ENCODE measurements at regions of chr19 and their contacts with region 1.

Region 1: DNA sequence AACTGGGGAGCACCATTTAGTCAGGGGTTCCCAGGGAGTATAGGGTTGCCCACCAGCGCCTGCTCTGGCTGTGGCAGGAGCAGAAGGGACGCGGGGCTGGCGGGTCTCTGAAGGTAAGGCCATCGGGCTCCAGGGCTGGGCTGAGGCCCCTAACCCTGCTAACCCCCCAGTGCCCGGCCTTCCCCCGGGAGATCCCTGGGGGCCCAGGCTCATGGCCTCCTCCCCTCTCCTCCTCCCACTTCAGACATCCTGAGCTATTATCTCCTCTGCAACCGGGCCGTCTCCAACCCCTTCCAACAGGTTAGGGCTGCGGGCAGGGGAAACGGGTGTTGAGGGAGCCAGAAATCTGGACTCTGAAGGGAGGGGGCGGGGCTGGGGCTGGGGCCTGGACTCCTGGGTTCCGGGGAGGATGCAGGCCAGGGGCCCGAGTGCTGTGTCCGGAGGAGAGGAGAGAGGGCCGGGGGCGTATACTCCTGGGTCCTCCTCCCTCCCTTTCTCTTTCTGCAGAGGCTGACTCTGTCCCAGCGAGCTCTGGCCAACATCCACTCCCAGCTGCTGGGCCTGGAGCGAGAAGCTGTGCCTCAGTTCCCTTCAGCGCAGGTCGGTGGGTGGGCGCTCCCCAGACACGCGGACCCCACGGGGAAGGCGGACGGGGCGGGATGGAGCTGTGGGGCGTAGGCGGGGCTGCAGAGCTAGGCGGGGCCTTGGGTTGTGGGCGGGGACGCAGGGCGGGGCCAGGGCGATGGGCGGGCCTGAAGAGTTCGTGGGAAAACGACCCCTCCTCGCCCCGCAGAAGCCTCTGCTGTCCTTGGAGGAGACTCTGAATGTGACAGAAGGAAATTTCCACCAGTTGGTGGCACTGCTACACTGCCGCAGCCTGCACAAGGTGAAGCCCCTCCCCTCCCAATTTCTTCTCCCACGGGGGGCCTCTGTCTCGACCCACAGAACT is 15.3 kb downstream of the TTYH1 start:
- DNase-seq: peak; percentile 81
- ATAC-seq: peak; percentile 85
- H3K4me3 Mint-ChIP-seq: peak overlapping the region; percentile 67
- H3K27ac Mint-ChIP-seq: no peak overlapping the region; the same call in 1 of the 2 replicates
- H3K4me1 Mint-ChIP-seq: peaks cover 29% of the 10 kb centered on the region
- H3K27me3 Mint-ChIP-seq: peaks cover 53% of the 10 kb centered on the region
- CTCF ChIP-seq: no peak

Region 2: DNA sequence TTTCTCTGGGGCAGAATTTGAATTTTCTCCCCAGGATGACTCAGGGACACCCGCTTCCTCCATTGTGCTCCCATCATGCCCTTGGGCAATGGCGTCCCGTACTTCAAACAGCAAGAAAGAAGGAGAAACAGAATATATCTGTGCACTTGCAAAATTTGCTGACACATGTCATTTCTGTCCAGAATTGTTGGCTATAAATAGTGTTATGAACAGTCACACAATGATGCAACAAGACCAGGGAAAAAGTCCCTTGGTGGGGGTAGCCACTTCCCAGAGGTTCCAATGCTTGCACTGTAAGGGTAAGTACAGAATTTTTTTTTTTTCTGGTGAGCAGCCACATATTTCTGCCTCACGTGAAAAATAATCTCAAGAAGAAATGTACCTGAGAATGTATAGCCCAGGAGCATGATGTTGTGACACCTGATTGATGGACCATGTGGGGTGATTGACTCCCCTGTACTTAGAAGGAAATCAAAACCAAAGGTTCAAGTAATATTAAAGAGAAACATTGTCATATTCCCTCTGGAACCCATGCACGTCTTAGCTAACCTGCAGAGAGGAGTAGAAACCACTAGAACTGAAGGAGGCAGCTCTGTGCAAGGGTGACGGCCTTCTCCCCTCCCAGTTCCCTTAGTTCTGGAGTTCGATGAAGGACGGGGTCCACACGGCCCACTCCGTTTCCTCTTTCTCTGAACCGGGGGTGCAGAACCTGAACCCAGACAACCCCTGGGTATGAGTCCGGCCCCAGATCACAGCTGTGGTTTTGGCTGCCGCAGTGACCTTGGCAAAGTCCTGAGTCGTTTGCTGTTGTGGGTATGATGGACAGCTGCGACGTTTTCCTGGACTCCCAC is 56.6 kb before region 1 on chr19:
- CTCF ChIA-PET with region 1: no interaction called
- POLR2A ChIA-PET with region 1: no interaction called
- DNase-seq: no peak
- ATAC-seq: no peak
- H3K4me3 Mint-ChIP-seq: no peak overlapping the region
- H3K27ac Mint-ChIP-seq: no peak overlapping the region
- H3K4me1 Mint-ChIP-seq: no peaks in the 10 kb centered on the region
- H3K27me3 Mint-ChIP-seq: peaks cover 25% of the 10 kb centered on the region
- CTCF ChIP-seq: no peak

Region 3: DNA sequence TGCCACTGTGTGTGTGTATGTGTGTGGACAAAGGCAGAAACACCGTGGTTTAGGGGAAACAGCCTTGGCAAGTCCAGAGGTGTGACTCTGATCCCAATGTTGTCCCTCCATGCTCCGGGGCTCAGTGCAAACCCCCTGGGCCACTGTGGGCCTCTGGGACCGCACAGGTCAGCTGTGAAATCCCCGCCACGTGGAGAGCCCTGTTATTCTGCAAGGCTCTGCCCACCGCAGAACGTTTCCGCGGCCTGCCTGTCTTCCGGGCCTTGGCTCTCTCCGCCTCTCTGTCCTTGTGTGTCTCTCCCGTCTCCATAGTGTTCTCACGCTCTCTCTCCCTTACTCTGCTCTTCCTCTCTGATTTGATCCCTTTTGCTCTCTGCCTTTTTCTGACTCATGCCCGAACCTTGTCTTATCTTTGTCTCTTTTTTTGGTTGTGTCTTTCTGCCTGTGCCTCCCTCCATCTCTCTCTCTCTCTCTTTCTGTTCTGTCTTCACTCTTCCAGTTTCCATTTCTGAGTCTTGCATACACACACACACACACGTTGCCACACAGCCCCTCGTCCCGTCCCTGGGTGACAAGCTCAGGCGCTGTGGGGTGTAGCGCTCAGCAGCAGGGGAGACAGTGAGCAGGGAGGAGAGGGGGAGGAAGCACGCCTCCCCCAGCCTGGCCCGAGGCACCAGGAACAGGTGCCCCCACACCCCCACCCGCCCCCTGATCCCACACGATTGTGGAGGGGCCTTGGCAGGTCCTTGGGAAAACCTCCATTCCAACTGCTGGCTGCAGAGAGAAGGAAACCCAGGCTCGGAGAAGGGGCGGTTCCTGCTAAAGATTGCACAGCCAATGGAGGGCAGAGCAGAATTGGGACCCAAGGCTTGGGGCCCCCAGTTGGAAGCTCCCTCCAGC is 12.3 kb before region 1 on chr19:
- CTCF ChIA-PET with region 1: interaction called, 58 read pairs
- POLR2A ChIA-PET with region 1: interaction called, 21 read pairs
- DNase-seq: no peak
- ATAC-seq: no peak
- H3K4me3 Mint-ChIP-seq: peak overlapping the region; percentile 51
- H3K27ac Mint-ChIP-seq: peak overlapping the region; percentile 43
- H3K4me1 Mint-ChIP-seq: peaks cover 45% of the 10 kb centered on the region
- H3K27me3 Mint-ChIP-seq: peaks cover 33% of the 10 kb centered on the region
- CTCF ChIP-seq: no peak

Region 4: DNA sequence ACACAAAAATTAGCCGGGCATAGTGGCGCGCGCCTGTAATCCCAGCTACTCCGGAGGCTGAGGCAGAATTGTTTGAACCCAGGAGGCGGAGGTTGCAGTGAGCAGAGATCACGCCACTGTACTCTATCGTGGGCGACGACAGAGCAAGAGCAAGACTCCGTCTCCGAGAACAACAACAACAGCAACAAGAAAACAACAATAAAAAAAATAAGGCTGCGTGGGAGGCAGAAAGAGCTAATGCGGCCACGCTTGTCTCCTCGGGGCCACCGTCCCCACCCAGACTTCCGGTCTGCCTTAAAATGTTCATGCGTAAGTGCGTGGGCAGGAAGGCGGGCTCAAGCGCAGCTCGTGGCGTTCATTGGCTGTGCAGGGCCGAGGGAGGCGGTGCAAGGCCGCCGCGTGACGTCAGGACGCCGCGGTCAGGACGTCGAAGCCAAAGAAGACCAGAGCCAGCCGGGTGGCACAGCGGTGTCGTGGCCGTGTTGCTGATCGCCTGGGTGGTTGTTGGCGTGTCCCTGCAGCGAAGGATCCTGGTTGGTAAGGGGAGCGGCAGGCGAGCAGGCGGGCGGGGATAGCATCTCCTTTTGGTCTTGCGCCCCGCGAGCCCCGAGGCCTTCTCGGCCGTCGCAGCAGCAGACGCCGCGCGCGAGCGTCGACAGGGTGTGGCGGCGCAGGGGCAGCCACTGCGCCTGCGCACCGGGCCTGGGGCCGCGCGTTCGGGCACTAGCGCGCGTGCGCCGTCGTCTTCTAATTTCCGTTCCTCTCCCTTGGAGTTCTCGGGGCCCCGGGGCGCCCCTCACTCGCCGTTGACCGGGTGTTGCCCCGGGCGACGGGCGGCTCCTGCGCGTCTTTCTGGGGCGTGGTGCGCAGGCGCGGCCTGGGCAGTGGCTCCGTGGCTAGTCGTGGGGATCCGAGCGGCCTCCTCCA is 18.5 kb after region 1 on chr19 and contains the start of gene LENG8:
- CTCF ChIA-PET with region 1: interaction called, 10 read pairs
- POLR2A ChIA-PET with region 1: no interaction called
- DNase-seq: peak; percentile 92
- ATAC-seq: peak; percentile 95
- H3K4me3 Mint-ChIP-seq: peak within 1 kb of the TSS; percentile 99
- H3K27ac Mint-ChIP-seq: peak within 1 kb of the TSS; percentile 99
- H3K4me1 Mint-ChIP-seq: peaks cover 25% of the 10 kb centered on the region
- H3K27me3 Mint-ChIP-seq: peaks cover 2% of the 10 kb centered on the region; the same call in 1 of the 2 replicates
- CTCF ChIP-seq: no peak
- total RNA-seq, gene LENG8: 175 to 187 TPM (median 187 TPM) in 3 replicates

Region 5: DNA sequence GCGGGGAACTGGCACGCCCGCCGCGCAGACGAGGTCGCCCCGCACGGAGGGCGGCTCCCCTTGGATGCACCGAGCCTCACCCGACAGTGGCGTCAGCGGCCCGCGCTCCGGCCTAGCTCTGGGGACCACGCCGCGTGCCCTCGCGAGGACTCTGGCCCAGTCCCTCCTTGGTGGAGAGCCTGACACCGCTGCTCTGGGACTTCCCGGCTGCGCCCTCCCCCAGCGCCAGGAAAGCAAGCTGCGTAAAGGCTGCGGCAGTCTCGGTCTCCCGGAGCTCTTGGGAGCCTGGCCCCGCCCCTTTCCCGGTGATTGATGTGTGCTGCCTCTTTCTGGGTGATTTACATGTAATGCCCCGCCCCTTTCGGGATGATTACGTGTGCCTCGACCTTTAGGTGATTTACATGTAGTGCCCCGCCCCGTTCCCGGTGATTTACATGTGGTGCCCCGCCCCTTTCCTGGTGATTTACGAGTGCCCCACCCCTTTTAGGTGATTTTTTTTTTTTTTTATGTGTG is 33.0 kb after region 1 on chr19 and contains the start of gene LENG9:
- CTCF ChIA-PET with region 1: interaction called, 11 read pairs
- POLR2A ChIA-PET with region 1: no interaction called
- DNase-seq: peak; percentile 99
- ATAC-seq: peak; percentile 59
- H3K4me3 Mint-ChIP-seq: peak within 1 kb of the TSS; percentile 78
- H3K27ac Mint-ChIP-seq: peak within 1 kb of the TSS; percentile 99
- H3K4me1 Mint-ChIP-seq: peaks cover 7% of the 10 kb centered on the region
- H3K27me3 Mint-ChIP-seq: peaks cover 25% of the 10 kb centered on the region
- CTCF ChIP-seq: no peak
- total RNA-seq, gene LENG9: 6.1 to 7.5 TPM (median 6.9 TPM) in 3 replicates

Region 6: GRCh38 chr19:54473021-54473891 is 42.7 kb after region 1 on chr19 and contains the start of gene CDC42EP5:
- CTCF ChIA-PET with region 1: interaction called, 13 read pairs
- POLR2A ChIA-PET with region 1: no interaction called
- DNase-seq: no peak
- ATAC-seq: peak; percentile 71
- H3K4me3 Mint-ChIP-seq: peak within 1 kb of the TSS; percentile 47
- H3K27ac Mint-ChIP-seq: peak within 1 kb of the TSS; percentile 10; the same call in 1 of the 2 replicates
- H3K4me1 Mint-ChIP-seq: peaks cover 26% of the 10 kb centered on the region
- H3K27me3 Mint-ChIP-seq: peaks cover 51% of the 10 kb centered on the region
- CTCF ChIP-seq: no peak
- total RNA-seq, gene CDC42EP5: 11.5 to 19.8 TPM (median 18.3 TPM) in 3 replicates

Measured in WTC11 (cell line).